ENCODE measurements at regions of chr20 and their contacts with region 1.

Region 1: GRCh38 chr20:2873010-2873746 is at the start of gene PTPRA:
- DNase-seq: peak; percentile 90 to 94
- H3K4me3 ChIP-seq: peak within 1 kb of the TSS; percentile 74 to 94
- H3K27ac ChIP-seq: peak within 1 kb of the TSS; percentile 71 to 81
- H3K4me1 ChIP-seq: peaks cover 0 to 48% (median 41%) of the 10 kb centered on the region in 4 donors
- H3K27me3 ChIP-seq: peaks cover 0 to 12% of the 10 kb centered on the region in 2 donors
- CTCF ChIP-seq: no peak

Region 2: GRCh38 chr20:2671977-2672376 is 201.2 kb before region 1 on chr20:
- intact Hi-C with region 1: no loop called
- DNase-seq: peak in 1 of 2 donors; percentile 24
- H3K4me3 ChIP-seq: no peak overlapping the region
- H3K27ac ChIP-seq: no peak overlapping the region
- H3K4me1 ChIP-seq: no peaks in the 10 kb centered on the region
- H3K27me3 ChIP-seq: no peaks in the 10 kb centered on the region
- CTCF ChIP-seq: no peak

Region 3: GRCh38 chr20:2752567-2753460 is 120.4 kb before region 1 on chr20:
- intact Hi-C with region 1: no loop called
- DNase-seq: no peak
- H3K4me3 ChIP-seq: peak overlapping the region; percentile 32 to 50
- H3K27ac ChIP-seq: no peak overlapping the region
- H3K4me1 ChIP-seq: peaks cover 0 to 35% (median 28%) of the 10 kb centered on the region in 4 donors
- H3K27me3 ChIP-seq: peaks cover 0 to 82% of the 10 kb centered on the region in 2 donors
- CTCF ChIP-seq: peak; percentile 34 to 52

Region 4: GRCh38 chr20:2840138-2840966 is 32.8 kb before region 1 on chr20 and contains the starts of genes PCED1A and VPS16:
- intact Hi-C with region 1: loop called (anchors 2 kb)
- DNase-seq: peak; percentile 84 to 92
- H3K4me3 ChIP-seq: peak within 1 kb of the TSS; percentile 89 to 95
- H3K27ac ChIP-seq: peak within 1 kb of the TSS; percentile 92 to 95
- H3K4me1 ChIP-seq: peaks cover 0 to 30% (median 17%) of the 10 kb centered on the region in 4 donors
- H3K27me3 ChIP-seq: no peaks in the 10 kb centered on the region
- CTCF ChIP-seq: no peak

Measured in tibial artery (tissue), 4 donors.